WTC11 (cell line): ENCODE measurements at regions of chr9 and their contacts with region 1.

Region 1: GRCh38 chr9:89428901-89429890 is 68.7 kb downstream of the SEMA4D start:
- DNase-seq: peak; percentile 75
- ATAC-seq: peak; percentile 86
- H3K4me3 Mint-ChIP-seq: 0 out of 2 replicates have a peak overlapping the region, but pooled peaks have one; percentile 14
- H3K27ac Mint-ChIP-seq: peak overlapping the region; percentile 92
- H3K4me1 Mint-ChIP-seq: peaks cover 58% of the 10 kb centered on the region
- H3K27me3 Mint-ChIP-seq: no peaks in the 10 kb centered on the region
- CTCF ChIP-seq: peak; percentile 42

Region 2: DNA sequence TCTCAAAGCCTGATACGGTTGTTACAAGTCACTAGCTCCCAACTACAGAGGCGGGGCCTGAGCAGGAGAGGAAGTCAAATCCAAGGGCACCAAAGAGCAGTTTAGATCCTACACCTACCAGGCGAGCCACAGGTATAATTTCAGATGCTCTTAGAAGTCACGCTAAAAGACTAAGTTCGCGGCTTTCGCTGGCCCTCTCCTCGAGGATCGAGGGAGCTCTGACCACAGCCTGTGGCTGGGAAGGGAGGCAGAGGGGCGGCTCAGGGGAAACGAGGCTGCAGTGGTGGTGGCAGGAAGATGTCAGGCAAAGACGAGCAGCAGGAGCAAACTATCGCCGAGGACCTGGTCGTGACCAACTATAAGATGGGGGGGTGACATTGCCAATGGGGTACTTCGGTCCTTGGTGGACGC is 20.1 kb after region 1 on chr9:
- CTCF ChIA-PET with region 1: interaction called, 17 read pairs
- POLR2A ChIA-PET with region 1: no interaction called
- DNase-seq: no peak
- ATAC-seq: no peak
- H3K4me3 Mint-ChIP-seq: no peak overlapping the region
- H3K27ac Mint-ChIP-seq: peak overlapping the region; percentile 75; the same call in 1 of the 2 replicates
- H3K4me1 Mint-ChIP-seq: peaks cover 19% of the 10 kb centered on the region
- H3K27me3 Mint-ChIP-seq: no peaks in the 10 kb centered on the region; the same call in 1 of the 2 replicates
- CTCF ChIP-seq: no peak

Region 3: DNA sequence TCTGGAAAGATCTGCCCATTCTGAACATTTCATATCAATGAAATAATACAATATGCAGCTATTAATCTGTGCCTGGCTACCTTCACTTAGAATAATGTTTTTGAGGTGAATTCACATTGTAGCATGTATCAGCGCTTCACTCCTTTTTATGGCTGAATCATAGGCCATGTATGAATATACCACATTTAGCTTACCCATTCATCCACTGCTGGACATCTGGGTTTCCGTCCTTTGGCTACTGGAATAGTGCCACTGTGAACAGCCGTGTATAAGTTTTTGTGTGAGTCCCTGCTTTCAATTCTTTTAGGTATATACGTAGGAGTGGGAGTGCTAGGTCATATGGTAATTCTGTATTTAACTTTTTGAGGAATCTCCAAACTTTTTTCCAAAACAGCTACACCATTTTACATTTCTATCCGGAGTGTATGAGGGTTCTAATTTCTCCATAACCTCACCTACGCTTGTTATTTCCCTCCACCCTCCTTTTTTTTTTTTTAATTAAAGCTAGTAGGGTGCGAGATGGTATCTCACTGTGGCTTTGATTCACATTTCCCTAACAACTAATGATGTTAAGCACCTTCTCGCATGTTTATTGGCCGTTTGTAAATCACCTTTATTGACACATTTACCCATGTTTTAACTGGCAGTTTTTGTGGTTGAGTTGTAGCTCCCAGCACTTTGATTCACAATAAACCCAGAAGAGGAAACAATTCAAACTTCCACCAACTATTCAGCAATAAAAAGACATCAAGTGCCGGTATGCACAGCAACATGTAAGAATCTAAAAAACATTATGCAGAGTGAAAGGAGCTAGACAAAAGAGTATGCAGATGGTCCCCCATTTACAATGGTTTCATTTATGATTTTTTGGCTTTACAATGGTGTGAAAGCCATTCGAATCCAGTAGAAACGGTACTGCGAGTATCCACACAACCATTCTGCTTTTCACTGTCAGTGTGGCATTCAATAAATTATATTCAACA is 60.6 kb after region 1 on chr9:
- CTCF ChIA-PET with region 1: interaction called, 15 read pairs
- POLR2A ChIA-PET with region 1: no interaction called
- DNase-seq: no peak
- ATAC-seq: peak; percentile 24; the same call in 1 of the 2 replicates
- H3K4me3 Mint-ChIP-seq: peak overlapping the region; percentile 24; the same call in 1 of the 2 replicates
- H3K27ac Mint-ChIP-seq: peak overlapping the region; percentile 78
- H3K4me1 Mint-ChIP-seq: peaks cover 76% of the 10 kb centered on the region
- H3K27me3 Mint-ChIP-seq: no peaks in the 10 kb centered on the region
- CTCF ChIP-seq: no peak

Region 4: DNA sequence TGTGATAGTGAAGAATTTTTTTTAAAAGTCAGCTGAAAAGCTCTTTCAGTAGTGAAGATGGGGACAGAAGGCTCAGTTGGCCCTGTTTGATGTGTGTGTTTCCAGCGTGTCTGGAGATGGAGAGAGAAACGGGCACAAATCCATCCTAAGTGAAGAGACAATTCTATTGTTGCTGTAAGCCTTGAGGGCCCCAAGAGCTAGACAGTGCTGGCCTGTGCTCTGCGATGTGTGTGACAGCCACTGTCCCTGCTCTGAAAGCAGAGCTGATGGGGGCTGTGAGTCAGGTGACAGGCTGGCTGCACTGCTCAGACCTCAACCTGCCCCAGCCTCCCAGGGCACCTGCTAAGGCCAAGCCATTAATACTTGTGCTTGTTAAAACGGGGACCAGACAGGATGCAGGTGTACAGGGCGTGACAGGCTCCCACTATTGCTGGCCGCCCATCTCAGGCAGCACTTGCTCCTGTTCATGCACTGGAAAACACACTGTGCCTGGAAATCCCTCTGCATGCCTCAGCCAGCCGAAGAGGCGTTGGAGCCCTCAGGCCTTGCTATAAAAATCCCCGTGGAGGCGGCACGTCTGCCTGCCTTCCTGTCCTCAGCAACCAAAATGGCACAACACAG is 113.3 kb after region 1 on chr9:
- CTCF ChIA-PET with region 1: interaction called, 135 read pairs
- POLR2A ChIA-PET with region 1: no interaction called
- DNase-seq: no peak
- ATAC-seq: no peak
- H3K4me3 Mint-ChIP-seq: no peak overlapping the region
- H3K27ac Mint-ChIP-seq: no peak overlapping the region
- H3K4me1 Mint-ChIP-seq: peaks cover 20% of the 10 kb centered on the region
- H3K27me3 Mint-ChIP-seq: peaks cover 3% of the 10 kb centered on the region; the same call in 1 of the 2 replicates
- CTCF ChIP-seq: no peak

Region 5: GRCh38 chr9:89564352-89564878 is 135.2 kb after region 1 on chr9:
- CTCF ChIA-PET with region 1: interaction called, 28 read pairs
- POLR2A ChIA-PET with region 1: no interaction called
- DNase-seq: peak; percentile 63
- ATAC-seq: peak; percentile 98
- H3K4me3 Mint-ChIP-seq: no peak overlapping the region
- H3K27ac Mint-ChIP-seq: peak overlapping the region; percentile 46; the same call in 1 of the 2 replicates
- H3K4me1 Mint-ChIP-seq: peaks cover 14% of the 10 kb centered on the region
- H3K27me3 Mint-ChIP-seq: no peaks in the 10 kb centered on the region
- CTCF ChIP-seq: peak; percentile 29; the same call in 1 of the 2 replicates